Activated naive CD4-positive, alpha-beta T cell treated with anti-CD3 and anti-CD28 coated beads for 36 hours (primary cell): ENCODE measurements at regions of chr2 and their contacts with region 1.

Region 1: DNA sequence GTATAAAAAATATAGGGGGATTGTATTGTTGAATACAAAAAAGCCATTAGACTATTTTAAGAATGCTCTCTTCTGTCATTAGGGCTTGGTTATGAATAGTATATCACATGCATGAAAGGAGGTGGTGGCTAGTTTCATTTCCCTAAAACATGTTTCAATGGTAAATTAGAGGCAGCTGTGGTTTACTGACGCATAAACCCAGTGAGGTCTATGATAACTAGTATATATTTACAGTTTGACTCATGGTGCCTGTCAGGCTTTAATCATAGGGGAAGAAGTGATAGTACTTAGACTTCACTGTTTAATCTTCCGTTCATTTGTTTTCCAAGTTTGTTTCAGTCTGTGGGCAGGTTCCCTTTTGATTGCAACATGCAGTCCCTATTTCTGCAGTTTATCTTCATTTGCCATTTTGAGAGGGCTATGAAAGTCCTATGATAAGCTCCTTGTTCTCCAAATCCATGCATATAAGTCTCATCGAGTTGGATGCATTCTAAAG is 55.1 kb upstream of the MAP4K3 start:
- DNase-seq: peak; percentile 67
- H3K4me3 Mint-ChIP-seq: peak overlapping the region; percentile 37
- H3K27ac Mint-ChIP-seq: peak overlapping the region; percentile 53
- H3K4me1 Mint-ChIP-seq: peaks cover 30% of the 10 kb centered on the region
- H3K27me3 Mint-ChIP-seq: peaks cover 6% of the 10 kb centered on the region

Region 2: GRCh38 chr2:39099870-39100728 is 392.0 kb before region 1 on chr2:
- CTCF ChIA-PET with region 1: no interaction called
- intact Hi-C with region 1: loop called (anchors 1 kb)
- DNase-seq: peak; percentile 38
- H3K4me3 Mint-ChIP-seq: no peak overlapping the region
- H3K27ac Mint-ChIP-seq: peak overlapping the region; percentile 75
- H3K4me1 Mint-ChIP-seq: peaks cover 47% of the 10 kb centered on the region
- H3K27me3 Mint-ChIP-seq: no peaks in the 10 kb centered on the region

Region 3: DNA sequence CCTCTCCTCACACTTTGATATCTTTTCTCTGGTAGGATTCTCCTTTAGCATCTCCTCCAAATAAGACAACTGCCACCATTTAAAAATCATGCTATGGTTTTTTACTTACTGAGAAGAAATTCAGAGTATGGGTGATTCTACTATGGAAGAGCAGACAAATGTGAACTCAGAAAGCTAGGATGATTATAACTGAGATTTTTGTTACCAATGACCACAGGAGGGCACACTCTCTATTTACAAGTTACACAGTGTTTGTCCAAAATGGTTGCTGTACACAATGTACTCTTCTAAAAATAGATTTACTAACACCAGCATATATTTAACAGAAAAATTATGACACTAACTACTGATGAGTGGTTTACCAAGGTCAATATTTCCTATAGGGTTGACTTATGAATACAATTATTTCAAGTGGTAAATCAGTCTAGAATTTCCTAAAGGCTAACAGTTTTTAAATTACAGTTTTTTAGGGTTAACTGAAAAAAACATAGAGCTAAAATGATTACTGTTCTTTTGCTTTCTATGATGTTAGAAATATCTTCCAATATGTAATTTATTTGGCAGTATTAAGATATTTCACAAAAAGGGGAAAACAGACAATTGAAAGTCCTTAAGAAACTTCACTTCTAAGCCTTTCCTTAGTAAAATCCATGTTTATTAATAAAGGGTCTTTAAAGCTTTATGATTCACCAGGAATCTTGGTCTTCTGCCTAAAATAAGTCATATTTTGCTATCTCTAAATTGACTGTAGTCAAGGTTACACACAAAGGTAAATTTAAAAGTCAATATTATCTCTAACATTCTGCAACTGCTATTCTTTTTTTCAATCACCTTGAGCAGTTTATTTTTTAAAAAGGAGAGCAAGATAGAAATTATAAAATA is 112.3 kb before region 1 on chr2:
- CTCF ChIA-PET with region 1: interaction called, 4 read pairs
- intact Hi-C with region 1: loop called (anchors 1 kb)
- DNase-seq: no peak
- H3K4me3 Mint-ChIP-seq: no peak overlapping the region
- H3K27ac Mint-ChIP-seq: no peak overlapping the region
- H3K4me1 Mint-ChIP-seq: peaks cover 19% of the 10 kb centered on the region
- H3K27me3 Mint-ChIP-seq: no peaks in the 10 kb centered on the region

Region 4: DNA sequence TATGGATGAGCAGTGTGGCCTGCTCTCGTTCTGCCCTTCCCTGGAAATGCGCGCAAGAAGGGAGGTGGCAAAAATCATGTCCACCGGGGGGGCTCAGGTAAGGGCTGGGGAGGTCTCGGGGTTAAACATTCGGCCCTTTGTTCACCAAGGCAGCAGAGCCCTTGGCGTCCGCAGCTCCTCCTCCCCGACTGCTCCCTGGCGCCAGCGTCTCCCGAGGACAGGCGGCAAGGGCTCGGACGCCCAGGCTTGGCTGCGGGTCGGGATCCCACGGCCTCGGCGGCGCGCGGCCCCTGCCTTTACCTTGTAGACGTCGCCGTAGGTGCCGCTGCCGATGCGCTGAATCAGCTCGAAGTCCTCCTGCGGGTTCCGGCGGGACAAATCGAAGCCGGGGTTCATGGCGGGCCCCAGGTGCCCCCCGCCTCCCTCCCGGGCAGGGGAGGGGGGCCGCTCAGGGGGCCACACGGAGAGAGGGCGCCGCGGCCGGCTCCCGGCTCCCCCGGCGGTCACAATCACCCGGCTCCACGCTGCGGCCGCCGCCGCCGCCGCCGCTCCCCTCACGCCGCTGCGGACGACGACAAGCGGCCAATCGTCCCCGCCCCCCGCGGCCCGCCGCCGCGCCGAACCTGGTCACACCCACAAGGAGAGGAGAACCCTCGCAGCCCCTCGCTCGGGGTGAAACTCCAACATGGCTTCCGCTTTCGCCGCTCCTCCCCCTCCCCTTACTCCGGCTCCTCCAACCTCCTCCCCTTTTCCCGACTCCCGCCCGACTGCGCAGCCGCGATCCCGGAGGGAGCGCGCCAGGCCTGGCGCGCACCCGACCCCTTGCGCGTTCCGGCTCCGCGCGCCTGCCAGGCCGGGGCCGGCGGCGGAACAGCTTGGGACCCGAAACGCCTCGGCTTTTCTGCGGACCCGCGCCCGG is 55.3 kb before region 1 on chr2 and contains the start of gene MAP4K3:
- CTCF ChIA-PET with region 1: interaction called, 3 read pairs
- intact Hi-C with region 1: loop called (anchors 1 kb)
- DNase-seq: peak; percentile 86
- H3K4me3 Mint-ChIP-seq: peak within 1 kb of the TSS; percentile 87
- H3K27ac Mint-ChIP-seq: peak within 1 kb of the TSS; percentile 83
- H3K4me1 Mint-ChIP-seq: peaks cover 66% of the 10 kb centered on the region
- H3K27me3 Mint-ChIP-seq: no peaks in the 10 kb centered on the region
- total RNA-seq, gene MAP4K3: 10.6 to 12.0 TPM

Region 5: GRCh38 chr2:39537150-39537549 is 45.0 kb after region 1 on chr2:
- CTCF ChIA-PET with region 1: no interaction called
- intact Hi-C with region 1: loop called (anchors 1 kb)
- DNase-seq: peak; percentile 19
- H3K4me3 Mint-ChIP-seq: no peak overlapping the region
- H3K27ac Mint-ChIP-seq: peak overlapping the region; percentile 39
- H3K4me1 Mint-ChIP-seq: peaks cover 16% of the 10 kb centered on the region
- H3K27me3 Mint-ChIP-seq: no peaks in the 10 kb centered on the region

Region 6: DNA sequence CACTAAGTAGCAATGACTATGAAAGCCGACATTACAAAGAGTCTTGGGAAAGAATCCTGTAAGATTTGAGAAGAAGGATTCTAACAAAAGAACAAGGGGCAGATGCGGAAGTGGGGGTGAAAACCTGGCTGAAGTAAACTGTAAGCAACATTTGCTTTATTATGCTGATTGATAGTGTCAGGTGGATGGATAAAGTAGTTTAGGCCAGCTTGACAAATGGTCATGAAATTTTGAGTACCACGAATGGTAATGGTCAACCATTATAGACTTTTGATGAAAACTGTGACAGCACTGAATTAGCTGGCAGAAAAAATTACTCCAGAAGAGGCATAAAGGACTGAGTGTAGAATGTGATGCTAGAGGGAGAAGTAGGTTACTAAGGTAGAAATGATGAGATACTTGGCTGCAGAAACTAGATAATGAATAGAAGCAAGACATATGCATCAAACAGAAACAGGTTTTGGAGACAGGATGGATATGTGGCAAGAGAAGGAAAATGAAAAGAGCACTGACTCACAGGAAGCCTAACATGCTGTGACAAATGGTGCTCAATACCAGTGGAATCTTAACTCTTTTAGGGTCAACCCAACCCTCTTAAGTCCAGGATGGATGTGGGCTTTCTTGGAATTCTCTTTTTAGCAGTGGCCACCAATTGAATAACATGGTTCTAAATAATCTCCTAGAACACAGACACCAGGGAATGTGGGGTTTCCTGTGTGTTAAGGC is 280.1 kb after region 1 on chr2:
- CTCF ChIA-PET with region 1: no interaction called
- intact Hi-C with region 1: loop called (anchors 1 kb)
- DNase-seq: no peak
- H3K4me3 Mint-ChIP-seq: no peak overlapping the region
- H3K27ac Mint-ChIP-seq: peak overlapping the region; percentile 9
- H3K4me1 Mint-ChIP-seq: peaks cover 45% of the 10 kb centered on the region
- H3K27me3 Mint-ChIP-seq: no peaks in the 10 kb centered on the region